ENCODE measurements at regions of chr2 and their contacts with region 1.

Region 1: GRCh38 chr2:36355151-36355889 is at the start of gene CRIM1:
- DNase-seq: peak; percentile 67
- ATAC-seq: peak; percentile 64
- H3K4me3 Mint-ChIP-seq: peak within 1 kb of the TSS; percentile 97
- H3K27ac Mint-ChIP-seq: peak within 1 kb of the TSS; percentile 61
- H3K4me1 Mint-ChIP-seq: peaks cover 30% of the 10 kb centered on the region
- H3K27me3 Mint-ChIP-seq: peaks cover 33% of the 10 kb centered on the region
- CTCF ChIP-seq: no peak
- total RNA-seq, gene CRIM1: 14.4 to 15.9 TPM

Region 2: DNA sequence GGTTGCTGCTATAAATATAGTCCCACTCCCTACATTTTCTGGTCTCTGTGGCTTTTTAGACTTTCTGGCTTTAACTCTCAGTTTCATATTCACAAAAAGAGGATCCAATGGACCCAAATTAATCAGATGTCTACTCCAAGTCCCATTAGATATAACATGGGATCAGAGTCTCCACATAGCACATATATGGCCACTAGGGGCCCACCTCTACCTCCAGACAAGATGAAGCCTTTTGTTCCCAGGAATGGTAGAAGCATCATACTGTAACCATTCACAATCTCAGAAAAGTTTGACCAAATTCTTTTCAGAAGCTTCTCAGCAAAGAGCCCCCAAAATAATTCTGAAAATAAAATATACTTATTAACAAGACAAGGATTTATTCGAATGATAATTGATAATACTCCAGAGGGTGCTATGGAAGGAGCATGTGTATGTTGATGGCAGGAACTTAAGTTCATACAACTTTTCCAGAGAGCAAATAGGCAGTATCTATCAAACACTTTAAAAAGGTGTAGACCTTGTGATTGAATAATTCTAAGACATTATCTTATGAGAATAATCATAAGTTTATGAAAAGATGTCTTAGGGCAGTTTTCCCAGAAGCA is 382.1 kb before region 1 on chr2:
- CTCF ChIA-PET with region 1: interaction called, 3 read pairs
- POLR2A ChIA-PET with region 1: no interaction called
- intact Hi-C with region 1: loop called (anchors 10 kb)
- DNase-seq: peak; percentile 36
- ATAC-seq: peak; percentile 55
- H3K4me3 Mint-ChIP-seq: no peak overlapping the region
- H3K27ac Mint-ChIP-seq: no peak overlapping the region
- H3K4me1 Mint-ChIP-seq: peaks cover 2% of the 10 kb centered on the region
- H3K27me3 Mint-ChIP-seq: no peaks in the 10 kb centered on the region
- CTCF ChIP-seq: peak; percentile 59

Region 3: GRCh38 chr2:36044411-36044810 is 310.9 kb before region 1 on chr2:
- CTCF ChIA-PET with region 1: no interaction called
- POLR2A ChIA-PET with region 1: no interaction called
- intact Hi-C with region 1: no loop called
- DNase-seq: no peak
- ATAC-seq: no peak
- H3K4me3 Mint-ChIP-seq: no peak overlapping the region
- H3K27ac Mint-ChIP-seq: no peak overlapping the region
- H3K4me1 Mint-ChIP-seq: no peaks in the 10 kb centered on the region
- H3K27me3 Mint-ChIP-seq: peaks cover 6% of the 10 kb centered on the region
- CTCF ChIP-seq: no peak

Region 4: GRCh38 chr2:36287363-36288275 is 67.7 kb before region 1 on chr2:
- CTCF ChIA-PET with region 1: no interaction called
- POLR2A ChIA-PET with region 1: no interaction called
- intact Hi-C with region 1: no loop called
- DNase-seq: peak; percentile 66
- ATAC-seq: peak; percentile 84
- H3K4me3 Mint-ChIP-seq: no peak overlapping the region
- H3K27ac Mint-ChIP-seq: peak overlapping the region; percentile 80
- H3K4me1 Mint-ChIP-seq: peaks cover 19% of the 10 kb centered on the region
- H3K27me3 Mint-ChIP-seq: no peaks in the 10 kb centered on the region
- CTCF ChIP-seq: no peak

Region 5: GRCh38 chr2:36338817-36339125 is 16.5 kb before region 1 on chr2:
- CTCF ChIA-PET with region 1: interaction called, 18 read pairs
- POLR2A ChIA-PET with region 1: no interaction called
- intact Hi-C with region 1: no loop called
- DNase-seq: no peak
- ATAC-seq: no peak
- H3K4me3 Mint-ChIP-seq: no peak overlapping the region
- H3K27ac Mint-ChIP-seq: no peak overlapping the region
- H3K4me1 Mint-ChIP-seq: peaks cover 10% of the 10 kb centered on the region
- H3K27me3 Mint-ChIP-seq: peaks cover 7% of the 10 kb centered on the region
- CTCF ChIP-seq: no peak

Region 6: DNA sequence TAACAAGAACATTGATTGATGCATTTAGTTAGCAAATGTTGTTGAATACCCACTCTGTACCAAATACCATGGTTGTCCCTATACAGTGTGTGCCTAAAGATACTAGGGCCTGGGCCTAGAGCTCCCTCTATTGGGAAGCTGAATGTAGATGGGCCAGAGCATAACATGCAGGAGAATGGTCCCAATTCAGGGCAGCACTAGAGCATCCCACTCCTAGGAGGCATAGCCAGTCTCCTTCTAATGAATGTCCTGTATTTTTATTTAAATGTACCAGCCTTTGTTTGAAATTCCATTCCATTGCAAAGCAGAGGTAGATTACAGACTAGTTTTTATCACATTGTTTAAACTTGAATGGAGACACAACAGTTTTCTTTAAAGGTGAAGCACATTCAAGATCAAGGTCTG is 152.1 kb after region 1 on chr2:
- CTCF ChIA-PET with region 1: interaction called, 8 read pairs
- POLR2A ChIA-PET with region 1: no interaction called
- intact Hi-C with region 1: loop called (anchors 5 kb)
- DNase-seq: peak; percentile 59
- ATAC-seq: peak; percentile 78
- H3K4me3 Mint-ChIP-seq: no peak overlapping the region
- H3K27ac Mint-ChIP-seq: no peak overlapping the region
- H3K4me1 Mint-ChIP-seq: no peaks in the 10 kb centered on the region
- H3K27me3 Mint-ChIP-seq: no peaks in the 10 kb centered on the region
- CTCF ChIP-seq: peak; percentile 66

Region 7: GRCh38 chr2:36663851-36664695 is 308.8 kb after region 1 on chr2:
- CTCF ChIA-PET with region 1: interaction called, 8 read pairs
- POLR2A ChIA-PET with region 1: no interaction called
- intact Hi-C with region 1: loop called (anchors 5 kb)
- DNase-seq: peak; percentile 19
- ATAC-seq: peak; percentile 62
- H3K4me3 Mint-ChIP-seq: no peak overlapping the region
- H3K27ac Mint-ChIP-seq: no peak overlapping the region
- H3K4me1 Mint-ChIP-seq: no peaks in the 10 kb centered on the region
- H3K27me3 Mint-ChIP-seq: peaks cover 3% of the 10 kb centered on the region
- CTCF ChIP-seq: peak; percentile 79

Region 8: GRCh38 chr2:36785179-36785795 is 430.0 kb after region 1 on chr2:
- CTCF ChIA-PET with region 1: interaction called, 5 read pairs
- POLR2A ChIA-PET with region 1: no interaction called
- intact Hi-C with region 1: loop called (anchors 10 kb)
- DNase-seq: peak; percentile 75
- ATAC-seq: peak; percentile 92
- H3K4me3 Mint-ChIP-seq: no peak overlapping the region
- H3K27ac Mint-ChIP-seq: no peak overlapping the region
- H3K4me1 Mint-ChIP-seq: no peaks in the 10 kb centered on the region
- H3K27me3 Mint-ChIP-seq: peaks cover 9% of the 10 kb centered on the region
- CTCF ChIP-seq: peak; percentile 92

Measured in activated CD8-positive, alpha-beta T cell treated with anti-CD3 and anti-CD28 coated beads for 36 hours (primary cell).